ENCODE measurements at regions of chr19 and their contacts with region 1.

Region 1: GRCh38 chr19:47256688-47257443 is 541 bp downstream of the CCDC9 start:
- DNase-seq: peak; percentile 97

Region 2: DNA sequence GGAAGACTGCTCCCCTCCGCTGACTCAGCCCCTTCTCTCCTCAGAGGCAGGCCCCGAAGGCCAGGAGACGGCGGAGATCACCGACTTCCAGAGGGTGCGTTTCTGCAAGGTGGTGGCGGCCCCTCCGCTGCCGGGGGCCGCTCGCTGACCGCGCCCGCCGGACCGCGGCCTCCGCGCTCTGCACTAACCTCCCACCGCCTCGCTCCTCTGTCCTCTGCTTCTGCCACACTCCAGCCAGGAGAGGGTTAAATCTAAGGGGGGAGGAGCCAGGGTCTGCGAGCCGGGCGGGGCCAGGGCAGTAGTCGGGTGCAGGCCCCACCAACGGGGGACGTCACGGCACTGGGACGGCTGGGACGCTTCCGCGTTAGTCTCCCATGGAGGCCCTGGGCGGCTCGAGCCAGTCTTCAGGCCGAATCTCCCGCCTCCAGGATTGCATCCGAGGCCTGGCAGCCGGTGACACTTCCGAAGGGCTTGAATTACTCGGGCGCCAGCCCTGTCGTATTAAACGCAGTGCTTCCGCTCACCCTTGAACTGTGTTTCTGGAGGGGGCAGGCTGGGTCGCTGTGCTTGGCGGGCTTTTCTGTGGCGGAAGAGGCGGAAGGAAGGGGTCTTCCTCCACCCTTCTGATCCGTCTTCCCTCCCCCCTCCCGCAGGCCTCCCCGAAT is 16.6 kb after region 1 on chr19:
- CTCF ChIA-PET with region 1: interaction called, 4 read pairs
- POLR2A ChIA-PET with region 1: interaction called, 44 read pairs
- DNase-seq: peak; percentile 83

Region 3: DNA sequence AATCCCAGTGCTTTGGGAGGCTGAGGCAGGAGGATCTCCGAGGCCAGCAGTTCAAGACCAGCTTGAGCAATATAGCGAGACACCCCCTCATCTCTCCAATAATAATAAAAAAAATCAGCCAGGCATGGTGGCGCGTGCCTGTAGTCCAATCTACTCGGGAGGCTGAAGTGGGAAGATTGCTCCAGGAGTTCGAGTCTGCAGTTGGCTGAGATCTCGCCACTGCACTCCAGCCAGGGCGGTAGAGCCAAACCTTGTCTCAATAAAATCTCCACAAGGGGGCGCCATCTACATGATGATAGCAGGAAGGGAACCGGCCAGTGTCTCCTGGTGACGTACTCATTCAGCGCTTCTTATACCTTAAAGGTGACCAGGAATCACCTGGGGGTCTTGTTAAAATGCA is 39.2 kb after region 1 on chr19:
- CTCF ChIA-PET with region 1: no interaction called
- POLR2A ChIA-PET with region 1: no interaction called
- DNase-seq: peak; percentile 76

Region 4: DNA sequence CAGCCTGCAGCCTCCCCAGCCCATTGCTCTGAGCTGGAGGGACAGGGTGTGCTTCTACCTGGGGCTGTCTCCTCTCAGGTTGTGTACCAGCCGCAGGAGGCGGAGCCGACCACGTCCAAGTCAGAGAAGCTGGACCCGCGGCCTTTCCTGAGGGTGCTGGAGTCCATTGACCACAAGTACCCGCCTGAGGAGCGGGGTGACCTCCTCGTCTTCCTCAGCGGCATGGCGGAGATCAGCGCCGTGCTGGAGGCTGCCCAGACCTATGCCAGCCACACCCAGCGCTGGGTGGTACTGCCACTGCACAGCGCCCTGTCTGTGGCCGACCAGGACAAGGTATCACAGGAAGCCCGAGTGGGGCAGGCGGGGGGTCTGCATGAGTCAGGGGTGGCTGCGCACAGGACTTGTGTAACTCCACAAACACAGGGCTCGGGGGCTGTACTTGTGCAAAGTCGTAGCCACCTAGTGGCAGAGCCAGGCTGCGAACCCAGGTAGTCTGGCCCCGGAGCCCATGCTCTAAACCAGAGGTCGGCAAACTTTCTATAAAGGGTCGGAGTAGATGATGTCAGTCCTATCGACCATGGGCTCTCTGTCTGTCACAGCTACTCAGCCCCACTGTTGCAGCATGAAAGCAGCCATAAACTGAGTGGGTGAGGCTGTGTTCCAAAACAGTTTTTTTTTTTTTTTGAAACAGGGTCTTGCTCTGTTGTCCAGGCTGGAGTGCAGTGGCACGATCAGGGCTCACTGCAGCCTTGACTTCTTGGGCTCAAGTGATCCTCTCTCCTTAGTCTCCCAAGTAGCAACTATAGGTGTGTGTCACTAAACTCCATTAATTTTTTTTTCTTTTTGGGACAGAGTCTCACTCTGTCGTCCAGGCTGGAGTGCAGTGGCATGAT is 101.2 kb after region 1 on chr19:
- CTCF ChIA-PET with region 1: no interaction called
- POLR2A ChIA-PET with region 1: no interaction called
- DNase-seq: no peak